PC-9 (cell line): ENCODE measurements at regions of chr2 and their contacts with region 1.

Region 1: DNA sequence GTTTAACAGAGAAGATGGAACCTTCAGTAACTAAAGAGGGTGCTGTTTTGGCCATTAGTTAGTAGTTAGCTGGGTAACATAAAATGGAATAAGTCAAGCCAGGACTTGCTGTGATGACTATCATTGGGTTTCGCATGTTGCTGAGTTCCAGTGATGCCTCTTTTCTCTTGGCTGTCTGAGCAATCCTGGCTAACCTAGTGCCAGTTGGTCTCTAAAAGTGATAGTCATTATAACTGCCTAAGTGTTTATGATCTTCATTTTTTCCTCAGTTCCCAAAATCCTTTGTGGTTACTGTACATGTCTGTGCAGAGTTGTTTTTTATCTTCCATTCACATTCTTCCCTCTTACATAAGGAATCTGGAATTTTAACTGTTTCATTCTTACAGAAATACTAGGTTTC is 33.4 kb downstream of the WDR43 start:
- DNase-seq: no peak
- H3K4me3 ChIP-seq: no peak overlapping the region
- H3K27ac ChIP-seq: no peak overlapping the region
- H3K4me1 ChIP-seq: no peaks in the 10 kb centered on the region
- H3K27me3 ChIP-seq: no peaks in the 10 kb centered on the region
- CTCF ChIP-seq: no peak

Region 2: DNA sequence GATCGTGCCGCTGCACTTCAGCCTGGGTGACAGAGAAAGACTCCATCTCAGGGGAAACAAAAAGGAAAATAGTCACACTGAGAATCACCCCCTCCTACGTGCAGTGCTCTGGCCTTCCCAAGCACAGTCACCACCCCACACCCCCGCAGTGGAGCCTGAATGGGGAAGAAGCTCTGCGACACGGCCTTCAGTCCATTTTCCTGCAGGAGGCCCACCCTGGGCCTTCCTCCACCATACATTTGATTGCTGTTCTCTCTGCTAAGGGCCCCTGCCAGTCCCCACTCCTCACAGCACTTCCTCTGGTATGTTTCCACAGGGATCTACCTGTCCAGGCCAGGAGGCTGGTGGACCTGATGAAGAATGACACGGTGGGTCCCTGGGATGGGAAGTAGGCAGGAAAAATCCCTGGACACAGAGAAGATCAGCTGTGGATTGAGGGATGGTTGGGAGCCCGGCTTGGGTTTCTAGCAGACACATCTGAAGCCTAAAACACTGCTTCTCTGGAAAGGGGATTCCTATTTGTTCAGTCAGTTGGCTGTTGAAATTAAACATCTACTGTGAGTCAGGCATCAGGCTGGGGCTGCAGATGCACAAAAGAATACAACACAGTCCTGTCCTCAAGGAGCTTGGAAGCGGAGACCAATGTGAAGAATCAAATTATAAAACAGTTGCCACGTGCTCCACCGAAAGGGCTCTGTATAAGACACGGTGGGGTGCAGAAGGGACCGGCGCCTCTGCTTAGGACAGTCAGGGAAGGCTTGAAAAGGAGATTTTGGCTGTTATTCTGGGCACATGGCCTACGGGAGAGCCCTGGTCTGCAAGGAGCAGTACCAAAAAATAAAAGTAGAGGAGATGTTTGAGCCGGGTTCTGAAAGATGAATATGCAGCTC is 349.8 kb before region 1 on chr2:
- CTCF ChIA-PET with region 1: no interaction called
- POLR2A ChIA-PET with region 1: no interaction called
- intact Hi-C with region 1: loop called (anchors 10 kb)
- DNase-seq: peak in 1 of 2 experiments; percentile 4
- H3K4me3 ChIP-seq: no peak overlapping the region
- H3K27ac ChIP-seq: no peak overlapping the region
- H3K4me1 ChIP-seq: peaks cover 24% of the 10 kb centered on the region
- H3K27me3 ChIP-seq: no peaks in the 10 kb centered on the region
- CTCF ChIP-seq: no peak

Region 3: DNA sequence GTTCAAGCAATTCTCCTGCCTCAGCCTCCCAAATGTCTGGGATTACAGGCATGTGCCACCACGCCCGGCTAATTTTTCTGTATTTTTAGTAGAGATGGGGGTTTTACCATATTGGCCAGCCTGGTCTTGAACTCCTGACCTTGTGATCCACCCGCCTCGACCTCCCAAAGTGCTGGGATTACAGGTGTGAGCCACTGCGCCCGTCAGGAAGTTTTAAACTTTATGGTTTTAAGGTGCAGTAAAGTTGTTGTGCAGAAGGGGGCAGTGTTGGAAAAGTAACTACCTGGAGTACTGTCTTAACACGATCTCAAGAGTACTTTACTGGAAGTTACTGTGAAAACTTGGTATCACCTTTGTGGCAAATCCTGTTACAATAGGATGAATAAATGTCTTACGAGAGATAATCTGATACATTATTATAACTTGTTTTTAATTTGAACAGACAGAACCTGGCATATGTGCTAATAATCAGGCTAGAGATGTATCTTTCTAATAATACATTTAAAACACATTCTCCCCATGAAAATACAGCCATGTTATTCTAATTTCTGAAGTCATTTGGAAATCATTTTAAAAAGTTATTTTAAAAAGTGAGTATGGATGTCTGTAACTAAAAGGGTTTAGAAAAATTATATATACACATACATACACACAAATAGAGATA is 106.5 kb before region 1 on chr2:
- CTCF ChIA-PET with region 1: no interaction called
- POLR2A ChIA-PET with region 1: no interaction called
- intact Hi-C with region 1: loop called (anchors 10 kb)
- DNase-seq: peak; percentile 45 to 50
- H3K4me3 ChIP-seq: no peak overlapping the region
- H3K27ac ChIP-seq: 0 out of 2 replicates have a peak overlapping the region, but pooled peaks have one; percentile 1
- H3K4me1 ChIP-seq: no peaks in the 10 kb centered on the region
- H3K27me3 ChIP-seq: no peaks in the 10 kb centered on the region
- CTCF ChIP-seq: peak; percentile 81